Activated CD4-positive, alpha-beta T cell treated with anti-CD3 and anti-CD28 coated beads, Interleukin-2, amount 10 ng/mL, durations not matched to agents 24 days and 14 days (primary cell): ENCODE measurements at regions of chr3 and their contacts with region 1.

Region 1: GRCh38 chr3:153443961-153444360 is 281.9 kb downstream of the RAP2B start:
- DNase-seq: no peak
- H3K4me3 Mint-ChIP-seq: no peak overlapping the region
- H3K27ac Mint-ChIP-seq: no peak overlapping the region
- H3K4me1 Mint-ChIP-seq: peaks cover 8% of the 10 kb centered on the region
- H3K27me3 Mint-ChIP-seq: no peaks in the 10 kb centered on the region

Region 2: DNA sequence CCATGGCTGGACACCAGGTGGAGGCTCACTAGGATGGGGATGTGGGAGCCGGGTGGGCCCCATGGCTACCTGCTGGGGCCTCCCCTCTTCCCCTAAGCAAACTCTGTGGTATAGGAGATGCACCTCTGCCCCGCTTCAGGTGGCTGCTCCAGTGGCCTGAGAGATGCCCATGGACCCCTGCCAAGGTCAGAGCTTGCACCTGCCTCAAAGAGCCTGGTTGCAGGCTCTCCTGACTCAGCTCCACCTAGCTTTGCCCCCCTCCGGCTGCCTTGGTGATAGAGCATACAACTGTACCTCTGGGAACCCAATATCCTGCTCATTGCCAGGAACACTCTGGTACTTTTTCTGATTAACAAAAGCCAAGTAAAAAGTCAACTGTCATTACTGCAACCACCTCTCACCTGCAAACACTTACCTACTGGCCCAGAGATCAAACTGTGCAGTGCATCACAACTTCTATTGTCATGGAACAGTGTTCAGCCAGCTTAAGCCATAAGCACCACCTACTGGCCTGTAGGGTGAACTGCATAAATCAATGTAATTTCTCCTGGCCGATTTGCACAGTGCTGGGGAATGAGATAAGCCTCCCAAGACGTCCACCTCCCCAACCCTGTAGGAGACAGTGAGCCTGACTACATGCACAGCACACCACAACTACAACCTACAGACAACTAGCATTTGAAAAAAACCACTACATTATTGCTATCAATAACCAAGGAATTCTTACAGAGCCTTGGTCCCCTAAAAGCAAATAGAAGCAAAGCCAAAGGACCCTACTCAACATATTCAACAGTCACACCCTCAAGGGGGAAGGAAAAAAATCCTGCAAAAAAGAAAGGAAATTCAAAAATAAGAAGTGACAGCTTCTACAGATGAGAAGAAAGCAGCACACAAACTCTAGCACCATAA is 324.9 kb after region 1 on chr3:
- intact Hi-C with region 1: loop called (anchors 5 kb)
- DNase-seq: peak; percentile 84
- H3K4me3 Mint-ChIP-seq: no peak overlapping the region
- H3K27ac Mint-ChIP-seq: no peak overlapping the region
- H3K4me1 Mint-ChIP-seq: peaks cover 4% of the 10 kb centered on the region
- H3K27me3 Mint-ChIP-seq: peaks cover 19% of the 10 kb centered on the region